ENCODE measurements at regions of chr2 and their contacts with region 1.

Region 1: DNA sequence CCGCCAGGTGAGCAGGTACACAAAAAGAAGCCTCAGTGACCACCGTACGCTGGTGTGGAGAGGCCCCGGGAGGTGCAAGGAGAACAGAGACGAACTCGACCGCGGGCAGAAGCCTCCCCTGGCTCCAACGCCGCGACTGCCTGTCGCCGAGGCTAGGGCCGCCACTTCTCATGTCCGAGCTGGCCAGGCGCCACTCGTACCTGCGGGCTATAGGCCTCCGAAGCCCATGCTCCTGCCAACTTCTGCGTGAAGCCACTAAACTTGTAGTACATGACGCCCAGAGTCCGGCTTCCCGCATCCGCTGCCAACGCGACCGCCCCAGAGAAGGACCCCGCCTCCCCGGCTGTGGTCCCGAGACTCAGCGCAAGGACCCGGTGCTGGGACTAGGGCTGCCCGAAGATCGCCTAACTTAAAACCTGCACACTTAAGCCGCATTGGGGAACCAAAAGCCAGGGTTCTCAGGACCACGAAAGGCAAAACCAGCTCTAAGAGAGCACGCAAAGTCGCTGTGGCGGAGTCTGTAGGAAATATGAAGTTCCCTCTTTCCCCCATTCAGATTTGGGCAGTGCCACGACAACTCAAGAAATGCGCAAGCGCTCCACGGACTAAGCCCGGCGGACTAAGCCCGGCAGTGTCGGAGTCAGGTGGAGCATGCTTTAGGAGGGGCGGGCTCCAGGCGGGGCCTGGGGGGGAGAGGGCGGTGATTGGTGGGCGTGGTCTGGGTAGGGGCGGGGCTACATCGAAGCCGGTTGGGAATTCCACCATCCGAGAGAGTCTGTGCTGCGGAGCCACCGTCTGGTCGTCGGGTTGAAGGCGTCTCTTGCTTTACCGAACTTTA is at the start of gene COX7A2L:
- DNase-seq: peak; percentile 98
- H3K4me3 Mint-ChIP-seq: peak within 1 kb of the TSS; percentile 84
- H3K27ac Mint-ChIP-seq: peak within 1 kb of the TSS; percentile 99
- H3K4me1 Mint-ChIP-seq: peaks cover 47% of the 10 kb centered on the region
- H3K27me3 Mint-ChIP-seq: no peaks in the 10 kb centered on the region
- total RNA-seq, gene COX7A2L: 102 to 107 TPM

Region 2: GRCh38 chr2:42095923-42096408 is 265.1 kb before region 1 on chr2:
- CTCF ChIA-PET with region 1: interaction called, 3 read pairs
- POLR2A ChIA-PET with region 1: no interaction called
- intact Hi-C with region 1: loop called (anchors 1 kb)
- DNase-seq: peak; percentile 82
- H3K4me3 Mint-ChIP-seq: no peak overlapping the region
- H3K27ac Mint-ChIP-seq: no peak overlapping the region
- H3K4me1 Mint-ChIP-seq: peaks cover 38% of the 10 kb centered on the region
- H3K27me3 Mint-ChIP-seq: no peaks in the 10 kb centered on the region

Region 3: DNA sequence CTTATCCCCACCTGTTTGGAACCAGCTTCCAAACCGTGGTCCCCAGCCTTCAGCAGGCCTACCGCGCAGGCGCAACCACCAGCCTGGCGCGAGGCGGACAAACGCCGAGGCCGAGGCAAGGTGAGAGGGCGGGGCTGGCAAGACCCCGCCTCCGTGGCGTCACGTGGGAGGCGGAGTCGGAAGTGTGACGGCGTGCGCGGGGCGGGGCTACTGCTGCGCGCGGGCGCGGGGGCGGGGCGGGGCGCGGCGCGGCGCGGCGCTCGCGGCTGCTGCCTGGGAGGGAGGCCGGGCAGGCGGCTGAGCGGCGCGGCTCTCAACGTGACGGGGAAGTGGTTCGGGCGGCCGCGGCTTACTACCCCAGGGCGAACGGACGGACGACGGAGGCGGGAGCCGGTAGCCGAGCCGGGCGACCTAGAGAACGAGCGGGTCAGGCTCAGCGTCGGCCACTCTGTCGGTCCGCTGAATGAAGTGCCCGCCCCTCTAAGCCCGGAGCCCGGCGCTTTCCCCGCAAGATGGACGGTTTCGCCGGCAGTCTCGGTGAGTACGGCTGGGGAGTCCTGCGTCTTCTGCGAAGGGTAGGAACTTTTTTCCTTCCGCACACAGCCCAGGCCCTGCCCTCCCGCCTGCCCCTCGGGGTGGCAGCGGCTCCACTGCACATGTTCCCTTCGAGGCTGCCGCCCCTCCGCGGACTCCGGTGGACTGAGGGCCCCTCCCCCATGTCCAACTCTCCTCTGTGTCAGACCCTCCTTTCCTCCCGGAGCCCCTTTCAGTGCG is 191.8 kb before region 1 on chr2 and contains the start of gene EML4:
- CTCF ChIA-PET with region 1: no interaction called
- POLR2A ChIA-PET with region 1: interaction called, 3 read pairs
- intact Hi-C with region 1: loop called (anchors 1 kb)
- DNase-seq: peak; percentile 94
- H3K4me3 Mint-ChIP-seq: no peak within 1 kb of the TSS
- H3K27ac Mint-ChIP-seq: no peak within 1 kb of the TSS
- H3K4me1 Mint-ChIP-seq: peaks cover 22% of the 10 kb centered on the region
- H3K27me3 Mint-ChIP-seq: no peaks in the 10 kb centered on the region
- total RNA-seq, gene EML4: 67.4 to 69.8 TPM

Region 4: DNA sequence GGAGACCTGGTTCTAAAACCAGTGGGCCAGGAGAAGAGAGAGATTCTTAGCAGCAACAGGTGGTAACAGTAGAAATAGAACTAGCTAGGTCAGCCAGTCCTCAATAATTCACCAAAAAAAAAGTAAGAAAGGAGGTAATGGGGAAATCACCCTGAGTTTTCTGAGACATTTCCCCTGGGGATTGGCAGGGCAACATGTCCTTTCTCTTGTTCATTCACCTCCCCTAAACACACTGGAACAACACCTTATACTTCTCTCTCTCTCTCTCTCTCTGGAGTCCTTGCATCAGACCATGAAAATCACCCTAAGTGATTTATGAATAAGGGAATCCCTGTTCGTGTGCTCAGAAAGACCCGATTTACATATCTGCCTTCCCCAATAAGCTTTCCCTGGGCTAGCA is 64.9 kb before region 1 on chr2:
- CTCF ChIA-PET with region 1: no interaction called
- POLR2A ChIA-PET with region 1: no interaction called
- intact Hi-C with region 1: loop called (anchors 2 kb)
- DNase-seq: no peak
- H3K4me3 Mint-ChIP-seq: no peak overlapping the region
- H3K27ac Mint-ChIP-seq: peak overlapping the region; percentile 71
- H3K4me1 Mint-ChIP-seq: peaks cover 65% of the 10 kb centered on the region
- H3K27me3 Mint-ChIP-seq: no peaks in the 10 kb centered on the region

Region 5: DNA sequence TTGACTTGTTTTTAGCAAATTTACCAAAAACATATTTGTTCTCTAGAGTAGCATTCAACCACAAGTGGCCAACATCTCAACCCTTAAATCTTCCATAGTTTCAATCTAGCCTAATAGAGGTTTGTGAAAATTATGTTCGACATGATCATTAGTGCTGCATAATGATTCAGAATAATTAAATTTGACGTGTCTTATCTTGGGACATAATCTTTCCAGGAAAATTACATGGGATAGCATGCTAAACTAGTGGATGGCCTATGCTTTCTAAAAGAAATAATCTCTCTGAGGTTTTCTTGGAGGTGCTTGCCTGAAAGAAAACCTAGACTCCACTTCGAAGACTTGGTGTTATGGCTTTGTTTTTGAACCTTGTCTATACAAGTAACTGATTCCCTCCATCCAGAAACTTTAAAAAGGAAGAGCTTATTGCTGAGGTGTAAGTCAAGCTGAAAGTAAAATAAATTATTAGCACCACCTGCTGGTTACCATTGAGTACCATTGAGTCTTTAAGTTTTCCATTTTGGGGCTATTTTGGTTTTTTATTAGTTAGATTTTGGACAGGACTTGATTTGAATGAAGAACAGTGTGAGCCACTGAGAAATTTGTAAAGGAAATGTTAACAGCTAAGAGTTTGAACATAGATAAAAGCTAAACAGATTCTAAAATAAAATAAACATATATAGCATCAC is 32.8 kb before region 1 on chr2:
- CTCF ChIA-PET with region 1: interaction called, 10 read pairs
- POLR2A ChIA-PET with region 1: no interaction called
- intact Hi-C with region 1: no loop called
- DNase-seq: no peak
- H3K4me3 Mint-ChIP-seq: no peak overlapping the region
- H3K27ac Mint-ChIP-seq: peak overlapping the region; percentile 54
- H3K4me1 Mint-ChIP-seq: peaks cover 5% of the 10 kb centered on the region
- H3K27me3 Mint-ChIP-seq: no peaks in the 10 kb centered on the region

Region 6: DNA sequence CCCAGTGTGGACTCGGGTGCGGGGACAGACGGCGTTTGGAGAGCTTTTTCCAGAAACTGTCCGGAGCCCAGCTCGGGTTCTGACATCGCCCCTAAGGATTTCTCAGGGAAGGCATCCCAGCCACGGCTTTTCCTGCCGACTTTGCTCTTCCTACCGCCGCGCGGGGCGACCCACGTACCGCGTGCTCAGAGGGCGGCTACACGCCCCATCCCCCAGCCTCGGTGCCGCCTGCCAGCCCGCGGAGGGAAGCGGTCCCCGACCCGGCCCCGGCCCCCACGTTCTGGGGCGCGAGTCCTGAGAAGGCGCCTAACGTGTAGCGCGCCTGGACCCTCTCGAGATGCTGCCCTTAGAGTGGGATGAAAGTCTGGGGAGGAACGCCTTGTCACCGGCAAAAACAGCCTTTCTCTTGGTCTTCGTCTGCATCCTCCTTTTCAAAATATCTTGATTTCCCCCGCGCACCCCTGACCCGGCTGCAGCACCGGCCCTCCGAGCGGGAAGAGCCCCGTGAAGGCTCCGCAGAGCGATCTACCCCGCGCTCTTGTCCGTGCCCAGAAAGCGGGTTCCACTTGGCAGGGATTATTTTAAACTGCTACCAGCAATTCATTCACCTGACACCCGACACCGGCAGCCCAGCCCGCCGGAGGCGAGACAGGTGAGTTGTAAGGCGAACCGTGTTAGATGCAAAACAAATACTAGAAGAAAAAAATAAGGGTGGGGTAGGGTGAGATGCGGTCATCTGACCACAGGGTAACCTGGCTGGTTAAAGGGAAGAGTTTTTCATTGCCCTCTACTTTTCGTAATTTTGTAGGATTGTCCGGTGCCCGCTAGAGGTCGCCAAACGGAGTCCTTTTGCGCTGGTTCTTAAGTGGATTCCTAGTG is 133.5 kb after region 1 on chr2:
- CTCF ChIA-PET with region 1: no interaction called
- POLR2A ChIA-PET with region 1: no interaction called
- intact Hi-C with region 1: loop called (anchors 2 kb)
- DNase-seq: peak; percentile 85
- H3K4me3 Mint-ChIP-seq: peak overlapping the region; percentile 72
- H3K27ac Mint-ChIP-seq: no peak overlapping the region
- H3K4me1 Mint-ChIP-seq: peaks cover 7% of the 10 kb centered on the region
- H3K27me3 Mint-ChIP-seq: peaks cover 22% of the 10 kb centered on the region